GM12878 (cell line): ENCODE measurements at regions of chr20 and their contacts with region 1.

Region 1: DNA sequence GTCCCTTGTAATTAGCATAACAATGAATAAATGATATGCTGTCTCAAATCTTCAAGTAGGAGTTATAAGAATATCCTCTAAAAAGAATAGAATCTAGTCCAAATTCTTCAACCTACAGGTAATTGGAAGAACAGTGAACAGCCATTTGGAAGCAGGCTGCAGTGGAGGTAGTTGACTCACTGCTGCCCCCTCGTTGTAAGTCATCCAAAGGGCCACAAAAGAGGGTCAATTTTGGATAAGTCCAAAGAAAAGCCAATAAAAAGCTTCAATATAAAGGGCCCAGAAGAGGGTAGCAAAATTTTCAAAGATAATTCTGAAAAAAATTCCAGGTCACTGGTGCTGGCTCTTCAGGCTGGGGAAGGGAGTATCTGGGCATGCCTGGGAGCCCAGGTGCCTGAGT is 60.8 kb upstream of the SSTR4 start:
- DNase-seq: no peak
- ATAC-seq: peak; percentile 65
- H3K4me3 ChIP-seq: no peak overlapping the region
- H3K27ac ChIP-seq: no peak overlapping the region
- H3K4me1 ChIP-seq: no peaks in the 10 kb centered on the region
- H3K27me3 ChIP-seq: no peaks in the 10 kb centered on the region; a peak in 1 of 4 replicates
- CTCF ChIP-seq: peak; percentile 32 to 43 (median 38); a peak in 5 of 6 replicates
- EP300 ChIP-seq: no peak
- POLR2A ChIP-seq: no peak
- RAD21 ChIP-seq: peak; percentile 36; the same call in 1 of the 2 replicates

Region 2: GRCh38 chr20:22846863-22847262 is 127.5 kb before region 1 on chr20:
- CTCF ChIA-PET with region 1: interaction called, 25 read pairs
- POLR2A ChIA-PET with region 1: no interaction called
- RAD21 ChIA-PET with region 1: interaction called, 16 read pairs
- SMC1A ChIA-PET with region 1: interaction called, 21 read pairs
- in situ Hi-C with region 1: no loop called
- intact Hi-C with region 1: loop called (anchors 10 kb)
- DNase-seq: no peak
- ATAC-seq: no peak
- H3K4me3 ChIP-seq: no peak overlapping the region
- H3K27ac ChIP-seq: no peak overlapping the region
- H3K4me1 ChIP-seq: no peaks in the 10 kb centered on the region
- H3K27me3 ChIP-seq: no peaks in the 10 kb centered on the region
- CTCF ChIP-seq: no peak
- EP300 ChIP-seq: no peak
- POLR2A ChIP-seq: no peak
- RAD21 ChIP-seq: no peak

Region 3: DNA sequence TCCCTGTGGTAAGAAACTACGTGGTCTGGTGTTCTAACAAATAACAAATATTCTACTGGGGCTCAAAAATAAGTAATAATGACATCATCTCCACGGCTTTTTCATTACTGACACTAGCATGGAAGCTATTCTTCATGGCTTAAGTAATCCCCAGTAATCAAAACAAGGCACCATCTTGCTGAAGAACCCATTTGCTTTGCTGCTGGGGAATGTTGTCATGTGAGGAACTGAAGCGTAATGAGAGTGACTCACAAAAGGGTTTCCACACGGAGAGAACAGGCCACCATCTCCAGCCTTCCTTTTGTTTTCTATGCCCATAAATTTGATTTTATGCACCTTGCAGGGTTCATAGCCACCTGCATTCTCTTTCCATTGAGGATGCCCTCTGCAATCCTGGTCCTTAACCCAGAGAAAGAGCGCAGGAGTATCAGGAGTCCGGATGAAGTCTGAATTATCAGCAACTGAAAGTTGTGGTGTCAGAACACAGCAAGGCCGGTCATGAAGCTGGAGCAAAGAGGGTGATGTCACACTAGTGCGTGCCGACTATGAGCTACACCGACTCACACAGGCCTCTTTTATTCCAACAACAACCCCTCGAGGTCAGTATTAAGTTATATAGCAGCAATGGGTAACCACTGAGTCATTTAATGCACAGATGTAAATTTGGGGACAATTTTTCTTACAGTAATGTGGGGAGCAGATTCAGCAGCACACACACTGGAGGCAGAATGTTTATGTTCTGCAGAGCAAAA is 112.9 kb before region 1 on chr20:
- CTCF ChIA-PET with region 1: no interaction called
- POLR2A ChIA-PET with region 1: no interaction called
- RAD21 ChIA-PET with region 1: no interaction called
- SMC1A ChIA-PET with region 1: no interaction called
- in situ Hi-C with region 1: no loop called
- intact Hi-C with region 1: loop called (anchors 10 kb)
- DNase-seq: no peak
- ATAC-seq: no peak
- H3K4me3 ChIP-seq: no peak overlapping the region
- H3K27ac ChIP-seq: no peak overlapping the region
- H3K4me1 ChIP-seq: no peaks in the 10 kb centered on the region
- H3K27me3 ChIP-seq: no peaks in the 10 kb centered on the region
- CTCF ChIP-seq: no peak
- EP300 ChIP-seq: no peak
- POLR2A ChIP-seq: no peak
- RAD21 ChIP-seq: no peak

Region 4: GRCh38 chr20:22962557-22963438 is 11.6 kb before region 1 on chr20:
- CTCF ChIA-PET with region 1: interaction called, 18 read pairs
- POLR2A ChIA-PET with region 1: no interaction called
- RAD21 ChIA-PET with region 1: interaction called, 3 read pairs
- SMC1A ChIA-PET with region 1: interaction called, 8 read pairs
- in situ Hi-C with region 1: no loop called
- intact Hi-C with region 1: no loop called
- DNase-seq: no peak
- ATAC-seq: no peak
- H3K4me3 ChIP-seq: no peak overlapping the region
- H3K27ac ChIP-seq: no peak overlapping the region
- H3K4me1 ChIP-seq: no peaks in the 10 kb centered on the region
- H3K27me3 ChIP-seq: no peaks in the 10 kb centered on the region
- CTCF ChIP-seq: no peak
- EP300 ChIP-seq: no peak
- POLR2A ChIP-seq: no peak
- RAD21 ChIP-seq: no peak